ENCODE measurements at regions of chr7 and their contacts with region 1.

Region 1: GRCh38 chr7:110719741-110720140 is 371.2 kb upstream of the LRRN3 start:
- DNase-seq: no peak
- ATAC-seq: no peak
- H3K4me3 Mint-ChIP-seq: no peak overlapping the region
- H3K27ac Mint-ChIP-seq: no peak overlapping the region
- H3K4me1 Mint-ChIP-seq: no peaks in the 10 kb centered on the region
- H3K27me3 Mint-ChIP-seq: no peaks in the 10 kb centered on the region
- CTCF ChIP-seq: no peak

Region 2: GRCh38 chr7:110084181-110084807 is 635.4 kb before region 1 on chr7:
- CTCF ChIA-PET with region 1: no interaction called
- POLR2A ChIA-PET with region 1: no interaction called
- intact Hi-C with region 1: loop called (anchors 5 kb)
- DNase-seq: no peak
- ATAC-seq: no peak
- H3K4me3 Mint-ChIP-seq: no peak overlapping the region
- H3K27ac Mint-ChIP-seq: no peak overlapping the region
- H3K4me1 Mint-ChIP-seq: no peaks in the 10 kb centered on the region
- H3K27me3 Mint-ChIP-seq: no peaks in the 10 kb centered on the region
- CTCF ChIP-seq: no peak

Region 3: DNA sequence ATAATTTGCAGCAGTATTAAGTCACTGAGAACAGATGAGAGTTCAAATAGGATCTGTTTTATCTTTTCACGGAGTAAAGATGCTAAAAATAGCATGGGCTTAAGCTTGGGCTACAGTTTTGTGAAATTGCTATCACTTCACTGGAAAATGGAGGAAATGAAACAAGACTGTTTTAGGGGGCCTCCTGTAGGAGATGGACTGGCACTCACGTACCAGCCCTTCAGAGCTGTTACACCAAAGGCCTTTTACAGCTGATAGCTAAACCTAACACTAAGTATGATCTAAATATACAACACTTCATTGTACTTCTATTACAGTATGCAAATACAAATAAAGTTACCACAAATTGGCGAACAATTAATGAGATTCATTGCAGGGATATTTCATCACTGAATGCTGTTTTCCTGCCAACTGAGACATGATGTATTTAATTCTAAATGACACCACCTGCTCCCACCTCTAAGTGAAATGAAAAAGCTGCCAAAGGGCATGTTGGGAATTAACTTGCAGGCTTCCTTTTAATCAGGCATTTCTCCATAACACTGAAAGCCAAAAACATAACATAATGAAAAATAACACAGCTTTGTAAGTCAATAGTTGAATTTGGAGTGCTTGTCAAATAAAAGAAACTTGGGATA is 66.7 kb after region 1 on chr7:
- CTCF ChIA-PET with region 1: no interaction called
- POLR2A ChIA-PET with region 1: no interaction called
- intact Hi-C with region 1: no loop called
- DNase-seq: no peak
- ATAC-seq: no peak
- H3K4me3 Mint-ChIP-seq: no peak overlapping the region
- H3K27ac Mint-ChIP-seq: no peak overlapping the region
- H3K4me1 Mint-ChIP-seq: no peaks in the 10 kb centered on the region
- H3K27me3 Mint-ChIP-seq: no peaks in the 10 kb centered on the region
- CTCF ChIP-seq: no peak